H1 (cell line): ENCODE measurements at regions of chr4 and their contacts with region 1.

Region 1: DNA sequence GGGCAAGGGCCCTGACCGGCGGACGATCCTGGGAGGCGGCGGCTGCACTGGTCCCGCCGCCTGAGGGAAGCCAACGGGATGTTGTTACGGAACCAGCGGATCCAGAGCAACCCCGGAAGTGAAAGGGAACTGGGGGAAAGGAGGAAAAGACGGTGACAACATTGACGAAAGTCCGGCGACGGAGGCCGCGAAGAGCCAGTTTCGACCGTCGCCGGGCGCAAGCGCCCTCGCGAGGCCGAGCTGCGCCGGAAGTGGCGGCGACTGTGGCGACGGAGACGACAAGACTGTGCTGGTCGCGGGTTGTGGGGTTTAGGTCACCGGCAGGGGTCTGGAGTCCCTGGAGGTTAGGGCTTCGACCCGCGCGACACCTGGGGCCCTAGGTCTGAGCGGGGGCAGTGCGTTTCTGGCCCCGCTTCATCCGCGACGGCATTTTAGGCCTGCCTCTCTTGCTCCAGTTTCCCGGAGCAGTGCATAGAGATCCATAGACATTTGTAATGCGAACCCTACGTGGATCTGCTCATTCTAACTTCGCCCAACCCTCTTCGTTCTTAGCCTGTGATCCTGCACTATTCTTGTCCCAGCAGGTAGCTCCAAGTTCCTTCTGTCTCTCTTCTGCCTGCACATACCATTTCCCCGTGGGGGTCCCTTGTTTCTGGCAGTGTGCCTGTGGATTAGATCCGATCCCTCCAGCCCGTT is at the start of gene BOD1L1:
- DNase-seq: peak; percentile 81 to 89
- H3K4me3 ChIP-seq: peak within 1 kb of the TSS; percentile 81 to 96 (median 94)
- H3K27ac ChIP-seq: peak within 1 kb of the TSS; percentile 73
- H3K4me1 ChIP-seq: peaks cover 0 to 4% (median 3%) of the 10 kb centered on the region in 4 experiments; a peak in 3 of 7 replicates
- H3K27me3 ChIP-seq: no peaks in the 10 kb centered on the region
- CTCF ChIP-seq: peak; percentile 35 to 45 (median 43)
- EP300 ChIP-seq: 0 out of 3 replicates have a peak, but pooled peaks of 1 of the 2 experiments have one; percentile 35
- POLR2A ChIP-seq: peak; percentile 72 to 88
- RAD21 ChIP-seq: peak in 1 of 2 experiments; percentile 19; a peak in 2 of 4 replicates
- total RNA-seq, gene BOD1L1: 34.9 and 39.3 TPM in 2 replicates

Region 2: DNA sequence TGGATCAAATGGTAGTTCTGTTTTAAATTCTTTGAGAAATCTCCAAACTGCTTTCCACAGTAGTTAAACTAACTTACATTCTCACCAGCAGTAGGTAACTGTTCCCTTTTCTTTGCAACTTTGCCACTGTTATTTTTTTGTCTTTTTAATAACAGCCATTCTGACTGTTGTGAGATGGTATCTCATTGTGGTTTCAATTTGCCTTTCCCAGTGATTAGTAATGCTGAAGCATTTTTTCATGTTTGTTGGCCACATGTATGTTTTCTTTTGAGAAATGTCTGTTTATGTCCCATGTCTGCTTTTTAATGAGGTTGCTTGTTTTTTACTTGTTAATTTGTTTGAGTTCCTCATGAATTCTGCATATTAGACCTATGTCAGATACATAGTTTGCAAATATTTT is 342.4 kb before region 1 on chr4:
- CTCF ChIA-PET with region 1: no interaction called
- POLR2A ChIA-PET with region 1: no interaction called
- DNase-seq: no peak
- H3K4me3 ChIP-seq: no peak overlapping the region
- H3K27ac ChIP-seq: no peak overlapping the region
- H3K4me1 ChIP-seq: no peaks in the 10 kb centered on the region
- H3K27me3 ChIP-seq: no peaks in the 10 kb centered on the region
- CTCF ChIP-seq: no peak
- EP300 ChIP-seq: no peak
- POLR2A ChIP-seq: no peak
- RAD21 ChIP-seq: no peak

Region 3: DNA sequence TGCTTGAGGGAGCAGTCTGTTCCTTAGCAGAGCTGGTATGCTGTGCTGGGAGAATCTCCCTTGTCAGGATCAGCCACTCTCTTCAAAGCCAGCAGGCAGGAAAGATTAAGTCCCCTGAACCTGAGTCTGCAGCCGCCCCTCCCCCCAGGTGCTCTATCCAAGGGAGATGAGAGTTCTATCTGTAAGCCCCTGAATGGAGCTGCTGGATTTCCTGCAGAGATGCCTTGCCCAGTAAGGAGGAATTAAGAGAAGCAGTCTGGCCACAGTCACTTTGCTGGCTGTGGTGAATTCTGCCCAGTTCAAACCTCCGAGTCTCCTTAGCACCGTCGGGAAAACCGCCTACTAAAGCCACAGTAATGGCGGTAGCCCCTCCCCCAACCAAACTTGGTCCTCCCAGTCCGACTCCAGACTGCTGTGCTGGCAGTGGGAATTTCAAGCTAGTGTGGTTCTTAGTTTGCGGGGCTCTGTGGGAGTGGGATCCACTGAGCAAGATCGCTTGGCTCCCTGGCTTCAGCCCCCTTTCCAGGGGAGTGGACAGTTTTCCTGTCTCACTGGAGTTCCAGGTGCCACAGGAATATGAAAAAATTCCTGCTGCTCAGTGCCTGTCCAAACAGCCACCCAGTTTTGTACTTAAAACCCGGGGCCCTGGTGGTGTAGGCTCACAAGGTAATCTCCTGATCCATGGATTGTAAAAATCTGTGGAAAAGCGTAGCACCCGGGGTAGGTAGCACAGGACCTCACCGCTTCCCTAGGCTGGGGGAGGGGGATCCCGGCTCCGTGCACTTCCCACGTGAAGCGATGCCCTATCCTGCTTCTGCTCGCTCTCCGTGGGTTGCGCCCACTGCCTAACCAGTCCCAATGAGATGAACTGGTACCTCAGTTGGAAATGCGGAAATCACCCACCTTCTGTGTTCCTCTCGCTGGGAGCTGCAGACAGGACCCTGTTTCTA is 181.6 kb before region 1 on chr4:
- CTCF ChIA-PET with region 1: no interaction called
- POLR2A ChIA-PET with region 1: no interaction called
- DNase-seq: peak in 1 of 2 experiments; percentile 82
- H3K4me3 ChIP-seq: peak overlapping the region; percentile 79 to 96 (median 82)
- H3K27ac ChIP-seq: peak overlapping the region; percentile 67
- H3K4me1 ChIP-seq: peaks cover 0 to 6% (median 2%) of the 10 kb centered on the region in 4 experiments; a peak in 3 of 7 replicates
- H3K27me3 ChIP-seq: no peaks in the 10 kb centered on the region
- CTCF ChIP-seq: 0 out of 4 replicates have a peak, but pooled peaks of 1 of the 3 experiments have one; percentile 6
- EP300 ChIP-seq: no peak
- POLR2A ChIP-seq: peak; percentile 58 to 64; a peak in 2 of 3 replicates
- RAD21 ChIP-seq: peak in 1 of 2 experiments; percentile 2; a peak in 1 of 4 replicates

Region 4: DNA sequence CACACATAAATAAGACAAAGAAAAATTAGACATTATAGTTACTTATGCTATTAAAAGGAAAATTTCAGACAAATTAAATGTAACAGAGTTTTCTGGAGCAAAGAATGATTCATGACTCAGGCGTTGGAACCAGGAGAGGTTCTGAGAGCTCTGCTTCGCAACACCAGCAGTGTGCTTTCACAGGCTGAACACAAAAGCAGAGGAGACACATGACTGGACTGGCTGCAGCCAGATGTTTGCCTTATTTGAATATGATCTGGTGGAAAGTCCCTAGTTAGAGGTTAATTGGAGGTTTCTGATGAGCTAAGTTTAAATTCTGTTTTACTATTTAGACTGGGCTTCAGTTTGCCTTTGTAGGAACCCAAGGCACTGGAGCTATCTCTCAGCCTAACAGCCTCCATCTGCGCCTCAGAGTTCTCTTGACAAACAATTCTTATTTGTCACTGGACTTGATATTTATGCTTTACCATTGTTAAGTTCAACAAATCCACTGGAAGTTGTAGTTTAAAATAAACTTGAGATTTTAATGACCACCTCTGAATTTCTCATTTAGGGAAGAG is 16.4 kb before region 1 on chr4:
- CTCF ChIA-PET with region 1: interaction called, 10 read pairs
- POLR2A ChIA-PET with region 1: interaction called, 4 read pairs
- DNase-seq: no peak
- H3K4me3 ChIP-seq: no peak overlapping the region
- H3K27ac ChIP-seq: no peak overlapping the region
- H3K4me1 ChIP-seq: no peaks in the 10 kb centered on the region
- H3K27me3 ChIP-seq: no peaks in the 10 kb centered on the region
- CTCF ChIP-seq: no peak
- EP300 ChIP-seq: no peak
- POLR2A ChIP-seq: no peak
- RAD21 ChIP-seq: no peak

Region 5: DNA sequence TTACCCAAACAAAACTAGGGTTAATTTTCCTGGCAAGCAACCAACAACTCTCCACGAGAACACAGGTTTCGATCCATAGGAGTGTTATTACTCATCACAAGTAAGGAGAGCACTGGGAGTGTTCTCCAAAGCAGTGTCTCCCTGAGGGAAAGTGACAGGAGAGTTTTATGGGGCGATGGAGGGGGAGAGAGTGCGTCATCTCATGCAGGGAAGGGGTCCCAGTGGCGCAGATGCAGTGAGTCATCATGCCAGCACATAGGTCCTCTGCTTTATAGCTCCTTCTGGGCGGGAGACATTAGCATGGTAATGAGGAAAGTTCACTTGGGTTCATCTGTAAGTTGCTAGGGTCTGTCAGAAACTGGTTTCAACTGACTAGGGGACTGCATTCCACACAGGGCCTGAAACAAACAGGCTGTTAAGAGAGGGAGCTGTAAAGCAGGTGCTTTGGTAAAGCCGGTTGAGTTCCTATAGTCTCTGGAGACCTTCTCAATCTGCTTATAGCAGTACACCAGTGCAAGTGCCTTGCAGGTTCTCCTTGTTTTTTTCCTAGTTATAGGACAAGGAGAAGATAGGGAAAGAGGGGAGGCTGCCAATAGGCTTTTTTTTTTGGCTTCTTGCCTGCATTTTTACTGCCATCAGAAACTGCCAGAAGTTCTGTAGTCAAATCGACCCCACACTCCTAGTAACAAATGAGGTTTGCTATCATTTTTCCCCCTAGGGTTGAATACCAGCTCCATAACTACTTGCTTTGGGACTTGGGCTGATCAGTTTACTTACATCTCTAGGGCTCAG is 12.6 kb after region 1 on chr4:
- CTCF ChIA-PET with region 1: interaction called, 6 read pairs
- POLR2A ChIA-PET with region 1: interaction called, 18 read pairs
- DNase-seq: peak in 1 of 2 experiments; percentile 54
- H3K4me3 ChIP-seq: peak overlapping the region in 2 of 4 experiments; percentile 3 to 27; a peak in 1 of 8 replicates
- H3K27ac ChIP-seq: no peak overlapping the region
- H3K4me1 ChIP-seq: peaks cover 2 to 17% (median 4%) of the 10 kb centered on the region in 4 experiments; a peak in 5 of 7 replicates
- H3K27me3 ChIP-seq: no peaks in the 10 kb centered on the region
- CTCF ChIP-seq: no peak
- EP300 ChIP-seq: peak in 1 of 2 experiments; percentile 4; a peak in 1 of 3 replicates
- POLR2A ChIP-seq: no peak
- RAD21 ChIP-seq: no peak

Region 6: DNA sequence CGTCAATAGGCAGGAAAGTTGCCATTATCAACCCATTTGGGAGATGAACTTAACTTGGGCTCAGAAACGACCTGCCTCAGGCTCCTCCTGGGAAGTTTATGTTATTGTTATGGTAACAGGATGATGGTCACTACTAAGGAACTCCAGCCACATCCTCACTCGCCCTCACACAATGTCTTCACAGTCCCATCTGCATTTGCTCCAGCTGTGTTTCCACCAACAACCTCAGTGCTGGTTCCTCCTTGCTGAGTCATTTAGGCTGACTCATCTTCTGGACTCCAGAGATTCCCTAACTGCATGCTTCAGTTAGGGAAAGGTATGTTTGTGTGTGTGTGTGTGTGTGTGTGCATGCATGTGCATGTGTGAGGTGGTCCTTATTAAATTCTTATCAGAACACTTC is 293.1 kb after region 1 on chr4:
- CTCF ChIA-PET with region 1: no interaction called
- POLR2A ChIA-PET with region 1: no interaction called
- DNase-seq: peak in 1 of 2 experiments; percentile 54
- H3K4me3 ChIP-seq: no peak overlapping the region
- H3K27ac ChIP-seq: no peak overlapping the region
- H3K4me1 ChIP-seq: peaks cover 0 to 7% (median 3%) of the 10 kb centered on the region in 4 experiments; a peak in 4 of 7 replicates
- H3K27me3 ChIP-seq: no peaks in the 10 kb centered on the region
- CTCF ChIP-seq: no peak
- EP300 ChIP-seq: no peak
- POLR2A ChIP-seq: no peak
- RAD21 ChIP-seq: no peak

Region 7: DNA sequence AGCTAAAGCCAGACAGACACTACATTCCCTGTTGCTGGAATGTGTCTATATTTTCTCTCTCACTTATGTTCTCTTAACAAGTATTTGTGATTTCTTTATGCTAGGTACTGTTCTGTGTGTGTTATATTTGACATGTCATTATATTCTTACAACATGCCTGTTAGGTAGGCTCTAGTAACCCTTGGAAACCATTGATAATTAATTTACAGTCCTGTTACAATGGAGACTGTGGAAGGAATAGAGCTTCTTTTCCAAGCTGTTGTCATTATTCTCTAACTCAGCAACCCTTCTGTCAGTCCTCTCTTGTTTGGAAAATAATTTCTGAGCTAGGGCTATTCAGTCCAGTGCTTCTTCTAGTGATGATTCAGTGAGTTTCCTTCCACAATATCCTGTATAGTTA is 418.9 kb after region 1 on chr4:
- CTCF ChIA-PET with region 1: no interaction called
- POLR2A ChIA-PET with region 1: no interaction called
- DNase-seq: no peak
- H3K4me3 ChIP-seq: no peak overlapping the region
- H3K27ac ChIP-seq: no peak overlapping the region
- H3K4me1 ChIP-seq: no peaks in the 10 kb centered on the region
- H3K27me3 ChIP-seq: peaks cover 0 to 1% (median 0%) of the 10 kb centered on the region in 4 experiments; a peak in 1 of 7 replicates
- CTCF ChIP-seq: no peak
- EP300 ChIP-seq: no peak
- POLR2A ChIP-seq: no peak
- RAD21 ChIP-seq: no peak